Dorsolateral prefrontal cortex (tissue), 120 donors: ENCODE measurements at regions of chr20 and their contacts with region 1.

Region 1: DNA sequence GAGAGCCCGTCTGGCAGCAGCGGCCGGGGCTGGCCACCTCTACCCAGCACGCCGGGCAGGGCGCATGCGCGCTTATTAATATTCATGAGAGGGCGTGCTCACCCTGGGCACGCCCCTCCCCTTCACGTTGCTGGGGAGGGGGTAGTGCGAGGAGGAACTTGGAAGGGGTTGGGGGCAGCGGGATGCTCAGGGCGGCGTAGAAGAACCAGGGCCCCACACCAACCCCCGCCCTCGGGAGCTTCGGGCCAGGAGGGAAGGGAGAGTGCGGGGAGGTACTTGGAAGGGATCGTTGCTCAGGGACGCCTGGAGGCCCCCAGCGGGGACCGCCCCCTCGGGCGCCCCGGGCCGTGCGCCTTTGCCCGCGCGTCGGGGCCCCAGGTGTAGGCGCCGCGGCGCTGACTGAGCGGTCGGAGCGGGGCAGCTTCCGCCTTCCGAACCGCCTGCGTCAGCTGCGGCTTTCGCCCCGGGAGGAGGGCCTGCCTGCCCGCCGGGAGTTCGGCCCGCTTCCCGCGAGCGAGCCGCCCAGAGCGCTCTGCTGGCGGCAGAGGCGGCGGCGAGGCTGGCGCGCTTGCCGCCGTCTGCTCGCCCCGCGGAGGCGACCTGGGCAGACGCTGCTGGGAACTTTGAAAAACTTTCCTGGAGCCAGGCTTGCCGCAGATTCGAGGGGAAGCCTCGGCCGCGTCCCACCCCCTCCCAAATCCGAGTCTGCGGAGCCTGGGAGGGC is at the start of gene JAG1:
- DNase-seq: peak; percentile 61 to 96 (median 90)
- H3K4me3 ChIP-seq: peak within 1 kb of the TSS; percentile 61 to 91 (median 80)
- H3K27ac ChIP-seq: peak within 1 kb of the TSS in 58 of 59 donors; percentile 20 to 95 (median 90)
- H3K27me3 ChIP-seq: no peaks in the 10 kb centered on the region
- CTCF ChIP-seq: peak in 1 of 56 donors; percentile 8
- total RNA-seq, gene JAG1: 10.2 to 51.4 (median 21.3) TPM

Region 2: GRCh38 chr20:10434467-10434831 is 239.7 kb before region 1 on chr20:
- intact Hi-C with region 1: loop called in 1 of 2 experiments (anchors 2 kb)
- DNase-seq: peak; percentile 83 to 95 (median 92)
- H3K4me3 ChIP-seq: peak overlapping the region; percentile 68 to 100 (median 94)
- H3K27ac ChIP-seq: peak overlapping the region; percentile 84 to 99 (median 98)
- H3K27me3 ChIP-seq: no peaks in the 10 kb centered on the region
- CTCF ChIP-seq: peak in 2 of 56 donors; percentile 6 to 12

Region 3: DNA sequence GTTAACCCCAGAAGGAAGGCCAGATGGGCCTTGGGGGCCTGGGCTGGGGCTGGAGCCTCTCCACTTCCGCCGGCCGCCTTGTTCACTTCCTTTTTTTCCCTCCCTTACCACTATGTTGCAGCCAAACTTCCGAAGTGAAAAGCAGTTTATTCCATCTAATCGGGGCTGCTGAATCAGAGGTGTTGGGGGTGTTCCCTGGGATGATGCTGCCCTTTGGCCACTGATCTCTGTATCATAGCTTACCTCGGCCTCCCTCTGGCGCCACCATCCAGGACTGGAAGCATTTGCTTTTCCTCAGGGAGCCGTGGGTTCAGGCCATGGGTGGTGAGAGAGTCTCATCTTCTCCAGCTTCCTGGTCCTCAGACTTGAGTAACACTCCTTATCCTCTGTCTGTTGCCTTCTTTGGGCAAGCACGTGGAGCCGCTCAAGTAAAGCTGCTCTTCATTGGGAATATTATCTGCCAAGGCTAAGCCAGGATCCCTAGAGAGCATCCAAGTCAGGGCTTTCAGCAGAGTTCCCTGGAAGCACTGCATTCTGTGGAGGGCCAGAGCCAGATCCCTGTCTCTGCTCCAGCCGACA is 199.5 kb before region 1 on chr20:
- intact Hi-C with region 1: loop called in 1 of 2 experiments (anchors 5 kb)
- DNase-seq: no peak
- H3K4me3 ChIP-seq: no peak overlapping the region
- H3K27ac ChIP-seq: peak overlapping the region in 1 of 59 donors; percentile 4
- H3K27me3 ChIP-seq: no peaks in the 10 kb centered on the region
- CTCF ChIP-seq: no peak

Region 4: DNA sequence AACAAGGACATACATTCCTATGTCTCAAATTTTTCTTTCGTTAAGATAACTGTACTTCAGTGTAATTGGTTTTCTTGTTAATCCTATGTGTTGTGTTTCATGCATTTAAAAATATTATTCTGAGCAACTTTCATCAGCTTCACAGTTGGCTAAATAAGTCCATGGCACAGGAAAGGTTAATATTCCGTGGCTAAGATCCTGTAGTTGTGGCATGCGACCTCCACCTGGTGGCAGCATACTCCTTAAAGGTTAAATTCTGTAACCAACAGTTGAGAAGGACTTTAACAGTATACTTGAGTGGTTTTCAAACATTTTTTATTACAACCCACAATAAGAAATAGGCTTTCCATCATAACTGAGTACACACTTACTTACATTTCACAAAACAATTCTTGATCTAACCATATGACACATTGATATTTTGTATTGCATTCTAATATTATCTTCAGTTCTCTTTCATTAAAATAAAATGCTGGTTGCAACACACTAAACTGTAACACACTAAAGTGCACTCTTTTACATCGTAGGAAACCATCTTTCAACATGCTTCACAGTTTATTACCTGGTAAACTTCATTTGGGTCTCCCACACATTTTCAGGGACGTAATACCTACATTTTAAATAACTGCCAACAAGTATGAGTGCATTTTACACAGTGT is 120.7 kb before region 1 on chr20:
- intact Hi-C with region 1: loop called in 1 of 2 experiments (anchors 5 kb)
- DNase-seq: peak in 8 of 10 donors; percentile 9 to 76 (median 52)
- H3K4me3 ChIP-seq: no peak overlapping the region
- H3K27ac ChIP-seq: no peak overlapping the region
- H3K27me3 ChIP-seq: no peaks in the 10 kb centered on the region
- CTCF ChIP-seq: peak; percentile 56 to 87 (median 76)

Region 5: GRCh38 chr20:10609276-10610169 is 64.6 kb before region 1 on chr20:
- intact Hi-C with region 1: loop called in 1 of 2 experiments (anchors 5 kb)
- DNase-seq: no peak
- H3K4me3 ChIP-seq: no peak overlapping the region
- H3K27ac ChIP-seq: peak overlapping the region in 7 of 59 donors; percentile 8 to 65 (median 37)
- H3K27me3 ChIP-seq: no peaks in the 10 kb centered on the region
- CTCF ChIP-seq: no peak

Region 6: GRCh38 chr20:10622657-10623418 is 51.3 kb before region 1 on chr20:
- intact Hi-C with region 1: no loop called
- DNase-seq: no peak
- H3K4me3 ChIP-seq: peak overlapping the region in 1 of 59 donors; percentile 2
- H3K27ac ChIP-seq: peak overlapping the region in 4 of 59 donors; percentile 14 to 29 (median 20)
- H3K27me3 ChIP-seq: no peaks in the 10 kb centered on the region
- CTCF ChIP-seq: no peak

Region 7: GRCh38 chr20:10636326-10636818 is 37.8 kb before region 1 on chr20:
- intact Hi-C with region 1: loop called in 1 of 2 experiments (anchors 2 kb)
- DNase-seq: no peak
- H3K4me3 ChIP-seq: no peak overlapping the region
- H3K27ac ChIP-seq: peak overlapping the region in 44 of 59 donors; percentile 3 to 87 (median 65)
- H3K27me3 ChIP-seq: no peaks in the 10 kb centered on the region
- CTCF ChIP-seq: no peak

Region 8: DNA sequence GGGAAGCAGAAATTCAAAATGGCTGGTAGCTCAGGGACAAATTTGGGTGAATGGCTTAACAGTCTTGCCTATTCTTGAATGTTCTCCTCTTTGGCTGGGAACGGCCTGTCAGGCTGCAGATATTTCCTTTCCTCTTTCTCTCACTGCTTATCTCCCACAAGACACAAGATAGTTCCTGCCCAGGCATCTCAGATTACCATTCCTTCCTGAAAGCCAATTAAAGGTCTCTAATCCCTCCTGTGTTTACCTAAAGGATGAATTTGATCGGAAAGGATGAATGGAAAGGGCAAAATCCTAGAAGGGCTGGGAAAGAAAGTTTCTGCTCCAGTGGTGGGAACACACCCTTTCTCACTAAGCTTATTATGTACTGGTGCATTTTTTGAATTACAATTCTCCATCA is 95.5 kb after region 1 on chr20:
- intact Hi-C with region 1: no loop called
- DNase-seq: no peak
- H3K4me3 ChIP-seq: no peak overlapping the region
- H3K27ac ChIP-seq: no peak overlapping the region
- H3K27me3 ChIP-seq: no peaks in the 10 kb centered on the region
- CTCF ChIP-seq: no peak

Region 9: DNA sequence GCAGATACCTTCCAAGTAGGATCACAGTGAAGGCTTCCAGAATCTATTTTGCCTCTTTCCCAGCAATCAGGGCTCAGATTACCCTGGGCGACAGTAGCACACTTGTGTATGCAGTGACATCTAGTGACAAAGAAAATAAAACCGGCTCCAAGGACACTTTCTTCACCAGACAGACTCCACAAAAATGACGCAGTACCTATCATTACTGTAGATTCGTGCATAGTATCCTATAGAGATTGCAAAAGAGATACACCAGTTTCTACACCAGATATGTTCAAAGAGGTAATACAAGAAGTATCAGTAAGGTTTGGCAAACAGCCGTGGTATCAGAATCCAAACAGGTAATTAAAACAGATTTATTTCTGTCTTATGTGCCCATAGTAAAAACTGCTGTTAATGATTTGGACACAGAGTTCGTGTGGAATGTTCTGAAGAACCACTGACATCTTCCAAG is 600.0 kb after region 1 on chr20:
- intact Hi-C with region 1: loop called (anchors 2 to 5 kb)
- DNase-seq: peak in 2 of 10 donors; percentile 48 to 54
- H3K4me3 ChIP-seq: peak overlapping the region in 1 of 59 donors; percentile 5
- H3K27ac ChIP-seq: peak overlapping the region in 1 of 59 donors; percentile 21
- H3K27me3 ChIP-seq: no peaks in the 10 kb centered on the region
- CTCF ChIP-seq: peak in 55 of 56 donors; percentile 55 to 91 (median 72)